ENCODE measurements at regions of chr2 and their contacts with region 1.

Region 1: DNA sequence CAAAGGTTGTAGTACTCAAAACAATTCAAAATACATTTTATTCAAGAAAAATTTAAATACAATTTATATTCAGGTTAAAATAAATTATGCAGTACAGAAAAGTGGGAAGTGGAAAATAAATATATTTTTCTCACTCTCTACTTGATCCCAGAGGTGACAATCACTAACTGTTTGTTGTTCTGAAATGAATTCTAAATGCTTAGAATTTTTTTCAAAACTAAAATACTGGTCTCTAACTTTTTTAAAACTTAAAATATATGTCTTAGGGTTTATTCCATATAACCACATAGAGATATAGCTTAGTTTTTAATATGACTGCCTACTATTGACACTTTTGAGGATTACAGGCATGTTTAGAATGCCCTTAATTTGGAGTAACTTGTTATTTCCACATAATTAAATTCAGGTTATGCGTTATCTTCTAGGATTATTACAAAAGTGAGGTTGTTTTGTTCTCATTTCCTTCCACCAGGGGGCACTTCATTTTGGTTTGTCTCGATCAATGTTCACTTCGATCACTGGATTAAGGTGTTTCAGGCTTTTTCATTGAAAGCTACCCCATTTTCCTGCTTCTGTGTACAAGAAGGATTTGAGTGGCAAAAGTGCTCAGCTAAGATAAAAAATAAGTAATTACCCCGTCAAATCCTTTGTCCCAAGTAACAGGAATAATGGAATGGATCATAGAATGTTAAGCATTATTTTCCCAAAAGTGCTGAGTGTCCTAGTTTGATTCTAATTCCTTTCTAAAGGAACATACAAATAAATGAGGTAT is 27.1 kb upstream of the TFPI start:
- DNase-seq: peak; percentile 67
- H3K4me3 ChIP-seq: peak overlapping the region in 1 of 3 experiments; percentile 34
- H3K27ac ChIP-seq: peak overlapping the region; percentile 78
- H3K4me1 ChIP-seq: peaks cover 23% of the 10 kb centered on the region
- H3K27me3 ChIP-seq: no peaks in the 10 kb centered on the region
- CTCF ChIP-seq: peak; percentile 45 to 46
- POLR2A ChIP-seq: no peak

Region 2: GRCh38 chr2:186183406-186183805 is 1397.9 kb before region 1 on chr2:
- CTCF ChIA-PET with region 1: no interaction called
- POLR2A ChIA-PET with region 1: no interaction called
- dilution Hi-C with region 1: no loop called
- intact Hi-C with region 1: no loop called
- DNase-seq: no peak
- H3K4me3 ChIP-seq: no peak overlapping the region
- H3K27ac ChIP-seq: no peak overlapping the region
- H3K4me1 ChIP-seq: no peaks in the 10 kb centered on the region
- H3K27me3 ChIP-seq: no peaks in the 10 kb centered on the region
- CTCF ChIP-seq: no peak
- POLR2A ChIP-seq: no peak

Region 3: GRCh38 chr2:186308347-186308746 is 1273.0 kb before region 1 on chr2:
- CTCF ChIA-PET with region 1: no interaction called
- POLR2A ChIA-PET with region 1: no interaction called
- dilution Hi-C with region 1: no loop called
- intact Hi-C with region 1: no loop called
- DNase-seq: peak; percentile 13
- H3K4me3 ChIP-seq: no peak overlapping the region
- H3K27ac ChIP-seq: no peak overlapping the region
- H3K4me1 ChIP-seq: peaks cover 4% of the 10 kb centered on the region
- H3K27me3 ChIP-seq: no peaks in the 10 kb centered on the region
- CTCF ChIP-seq: no peak
- POLR2A ChIP-seq: no peak

Region 4: DNA sequence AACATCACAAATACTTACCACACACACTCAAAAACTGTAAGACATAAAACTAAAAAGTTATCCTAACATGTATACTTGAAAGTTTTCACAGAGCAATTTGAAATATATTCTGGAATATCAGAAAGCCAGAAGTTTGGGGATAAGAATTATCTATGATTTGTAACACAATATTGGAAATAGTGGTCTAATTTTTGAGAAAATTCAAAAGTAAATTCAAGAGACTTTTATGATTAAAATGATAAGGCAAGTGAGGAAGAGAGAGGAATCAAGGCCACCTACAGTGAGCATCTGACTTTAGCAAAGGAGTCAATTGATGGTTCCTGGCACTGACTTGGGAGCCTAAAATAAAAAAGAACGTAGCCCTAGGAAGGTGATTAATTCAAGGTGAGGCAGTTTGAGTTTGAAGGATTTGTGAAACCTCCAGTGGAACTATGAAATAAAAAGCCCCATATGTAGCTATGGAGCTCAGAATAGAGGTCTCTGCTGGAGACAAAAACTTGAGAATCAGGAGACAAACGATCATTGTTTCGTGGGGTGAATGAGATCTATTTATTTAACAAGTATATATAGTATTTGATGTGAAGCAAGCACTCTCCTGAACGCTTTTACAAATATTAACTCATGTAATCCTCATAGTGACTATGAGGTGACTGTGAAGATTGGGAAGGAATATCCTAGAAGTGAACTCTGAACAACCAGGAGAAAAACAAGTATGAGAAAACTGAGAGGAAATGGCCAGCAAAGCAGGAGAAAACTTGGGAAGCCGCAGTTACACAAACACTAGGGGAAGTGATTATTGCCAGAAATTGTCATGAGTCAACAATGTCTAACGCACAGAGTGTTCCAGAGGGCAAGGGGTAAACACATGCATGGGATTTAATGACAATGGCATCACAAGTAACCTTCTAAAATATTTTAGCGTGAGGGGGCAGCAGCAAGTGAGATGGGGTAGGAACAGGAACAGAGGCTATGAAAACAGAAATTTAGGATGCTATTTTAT is 39.9 kb before region 1 on chr2:
- CTCF ChIA-PET with region 1: interaction called, 45 read pairs
- POLR2A ChIA-PET with region 1: interaction called, 3 read pairs
- dilution Hi-C with region 1: no loop called
- intact Hi-C with region 1: loop called (anchors 1 kb)
- DNase-seq: peak; percentile 96
- H3K4me3 ChIP-seq: peak overlapping the region in 1 of 3 experiments; percentile 11
- H3K27ac ChIP-seq: peak overlapping the region; percentile 94
- H3K4me1 ChIP-seq: peaks cover 55% of the 10 kb centered on the region
- H3K27me3 ChIP-seq: no peaks in the 10 kb centered on the region
- CTCF ChIP-seq: no peak
- POLR2A ChIP-seq: peak; percentile 81

Region 5: GRCh38 chr2:187554011-187554703 is 27.2 kb before region 1 on chr2 and contains the start of gene TFPI:
- CTCF ChIA-PET with region 1: interaction called, 45 read pairs
- POLR2A ChIA-PET with region 1: no interaction called
- dilution Hi-C with region 1: no loop called
- intact Hi-C with region 1: loop called (anchors 1 kb)
- DNase-seq: peak; percentile 93
- H3K4me3 ChIP-seq: peak within 1 kb of the TSS; percentile 82 to 95 (median 87)
- H3K27ac ChIP-seq: peak within 1 kb of the TSS; percentile 87
- H3K4me1 ChIP-seq: peaks cover 36% of the 10 kb centered on the region
- H3K27me3 ChIP-seq: no peaks in the 10 kb centered on the region
- CTCF ChIP-seq: no peak
- POLR2A ChIP-seq: peak; percentile 97
- total RNA-seq, gene TFPI: 266 and 286 TPM in 2 replicates

Region 6: GRCh38 chr2:187748958-187749357 is 167.6 kb after region 1 on chr2:
- CTCF ChIA-PET with region 1: no interaction called
- POLR2A ChIA-PET with region 1: no interaction called
- dilution Hi-C with region 1: no loop called
- intact Hi-C with region 1: no loop called
- DNase-seq: no peak
- H3K4me3 ChIP-seq: no peak overlapping the region
- H3K27ac ChIP-seq: no peak overlapping the region
- H3K4me1 ChIP-seq: no peaks in the 10 kb centered on the region
- H3K27me3 ChIP-seq: no peaks in the 10 kb centered on the region
- CTCF ChIP-seq: no peak
- POLR2A ChIP-seq: no peak

Region 7: GRCh38 chr2:188369365-188369764 is 788.1 kb after region 1 on chr2:
- CTCF ChIA-PET with region 1: interaction called, 8 read pairs
- POLR2A ChIA-PET with region 1: no interaction called
- dilution Hi-C with region 1: no loop called
- intact Hi-C with region 1: loop called (anchors 5 kb)
- DNase-seq: peak; percentile 70
- H3K4me3 ChIP-seq: no peak overlapping the region
- H3K27ac ChIP-seq: no peak overlapping the region
- H3K4me1 ChIP-seq: no peaks in the 10 kb centered on the region
- H3K27me3 ChIP-seq: no peaks in the 10 kb centered on the region
- CTCF ChIP-seq: peak; percentile 53 to 76
- POLR2A ChIP-seq: no peak

Region 8: GRCh38 chr2:188518381-188518780 is 937.1 kb after region 1 on chr2:
- CTCF ChIA-PET with region 1: interaction called, 19 read pairs
- POLR2A ChIA-PET with region 1: no interaction called
- dilution Hi-C with region 1: no loop called
- intact Hi-C with region 1: no loop called
- DNase-seq: no peak
- H3K4me3 ChIP-seq: no peak overlapping the region
- H3K27ac ChIP-seq: no peak overlapping the region
- H3K4me1 ChIP-seq: peaks cover 15% of the 10 kb centered on the region
- H3K27me3 ChIP-seq: no peaks in the 10 kb centered on the region
- CTCF ChIP-seq: no peak
- POLR2A ChIP-seq: no peak

Measured in endothelial cell of umbilical vein (primary cell).